ENCODE measurements at regions of chrX and their contacts with region 1.

Region 1: DNA sequence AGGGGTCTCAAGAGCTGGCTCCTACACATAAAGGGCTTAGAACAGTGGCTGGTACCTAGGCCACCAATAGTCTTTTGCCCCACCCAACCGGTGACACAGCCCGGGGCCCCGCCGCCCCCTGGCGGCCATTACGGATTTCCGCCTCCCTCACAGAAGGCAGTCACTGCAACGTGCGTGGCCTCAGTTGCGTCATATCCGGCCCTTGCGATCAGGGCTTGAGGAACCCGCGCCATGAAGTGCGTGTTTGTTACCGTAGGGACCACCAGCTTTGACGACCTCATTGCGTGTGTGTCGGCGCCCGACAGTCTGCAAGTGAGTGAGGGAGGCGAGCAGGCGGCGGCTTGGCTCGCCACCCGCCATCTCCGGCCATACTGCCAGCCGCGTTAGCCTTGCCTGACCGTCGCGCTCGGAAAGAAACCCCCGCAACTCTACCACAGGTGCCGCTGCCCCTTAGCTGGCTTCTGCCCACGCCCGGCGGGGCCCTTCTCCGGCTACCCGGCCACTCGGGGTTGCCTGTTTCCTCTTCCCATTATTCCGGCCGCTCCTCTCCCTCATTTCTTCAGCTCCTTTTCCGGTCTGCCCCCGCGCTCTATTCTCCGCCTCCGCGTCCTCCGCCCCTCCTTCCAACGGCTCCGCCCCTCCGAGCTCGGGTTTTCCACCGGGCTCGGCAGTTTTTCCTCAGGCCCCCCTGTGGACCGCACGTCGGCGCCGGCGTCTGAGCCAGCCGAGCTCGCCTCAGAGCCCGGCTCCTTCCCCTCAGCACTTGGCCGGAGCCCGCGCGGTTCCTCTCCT is at the start of gene ALG13:
- DNase-seq: peak; percentile 89
- H3K4me3 Mint-ChIP-seq: peak within 1 kb of the TSS; percentile 84
- H3K27ac Mint-ChIP-seq: peak within 1 kb of the TSS; percentile 92
- H3K4me1 Mint-ChIP-seq: peaks cover 26% of the 10 kb centered on the region
- H3K27me3 Mint-ChIP-seq: no peaks in the 10 kb centered on the region
- total RNA-seq, gene ALG13: 44.7 to 47.8 TPM

Region 2: GRCh38 chrX:111504941-111505340 is 176.2 kb before region 1 on chrX:
- CTCF ChIA-PET with region 1: no interaction called
- intact Hi-C with region 1: loop called (anchors 5 kb)
- DNase-seq: no peak
- H3K4me3 Mint-ChIP-seq: no peak overlapping the region
- H3K27ac Mint-ChIP-seq: no peak overlapping the region
- H3K4me1 Mint-ChIP-seq: no peaks in the 10 kb centered on the region
- H3K27me3 Mint-ChIP-seq: peaks cover 4% of the 10 kb centered on the region

Region 3: GRCh38 chrX:111646515-111646914 is 34.7 kb before region 1 on chrX:
- CTCF ChIA-PET with region 1: no interaction called
- intact Hi-C with region 1: no loop called
- DNase-seq: no peak
- H3K4me3 Mint-ChIP-seq: no peak overlapping the region
- H3K27ac Mint-ChIP-seq: no peak overlapping the region
- H3K4me1 Mint-ChIP-seq: no peaks in the 10 kb centered on the region
- H3K27me3 Mint-ChIP-seq: no peaks in the 10 kb centered on the region

Region 4: DNA sequence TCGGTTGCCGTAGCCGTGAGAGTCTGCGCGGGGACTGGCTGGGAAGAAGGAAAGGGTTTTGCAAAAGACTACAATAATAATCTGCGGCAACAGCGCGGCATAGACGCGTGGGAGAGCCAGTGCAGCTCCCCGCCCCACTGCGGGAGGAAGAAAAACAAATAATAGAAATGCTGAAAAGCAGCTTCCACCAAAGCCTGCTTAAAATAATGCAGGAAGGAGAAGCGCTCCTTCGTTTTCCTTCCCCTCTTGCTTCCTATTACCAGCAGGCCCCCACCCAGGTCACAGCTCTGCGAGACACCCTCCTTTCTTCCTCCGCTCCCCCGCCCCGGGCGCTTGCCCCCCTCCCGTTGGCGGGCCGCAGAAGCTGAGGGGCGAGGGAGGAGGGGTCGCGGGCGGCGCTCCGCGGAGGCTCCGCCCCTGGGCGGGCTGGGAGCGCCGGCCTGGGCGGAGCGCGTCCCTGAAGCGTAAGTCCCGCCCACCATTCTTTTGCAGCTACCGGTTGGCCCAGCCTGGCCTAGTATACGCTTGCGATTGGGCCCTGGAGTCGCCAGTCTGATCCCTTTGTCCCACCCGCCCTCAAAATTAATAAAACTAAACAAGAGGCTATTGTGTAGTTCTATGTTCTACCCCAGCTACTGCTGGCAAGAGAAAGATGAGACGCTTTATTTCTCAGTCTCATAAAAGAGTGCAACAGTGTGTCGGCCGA is 1160.1 kb after region 1 on chrX:
- CTCF ChIA-PET with region 1: no interaction called
- intact Hi-C with region 1: loop called (anchors 5 kb)
- DNase-seq: peak; percentile 77
- H3K4me3 Mint-ChIP-seq: peak overlapping the region; percentile 80
- H3K27ac Mint-ChIP-seq: no peak overlapping the region
- H3K4me1 Mint-ChIP-seq: peaks cover 11% of the 10 kb centered on the region
- H3K27me3 Mint-ChIP-seq: no peaks in the 10 kb centered on the region

Measured in activated naive CD4-positive, alpha-beta T cell treated with anti-CD3 and anti-CD28 coated beads for 36 hours (primary cell).